Mammary epithelial cell (primary cell): ENCODE measurements at regions of chr3 and their contacts with region 1.

Region 1: DNA sequence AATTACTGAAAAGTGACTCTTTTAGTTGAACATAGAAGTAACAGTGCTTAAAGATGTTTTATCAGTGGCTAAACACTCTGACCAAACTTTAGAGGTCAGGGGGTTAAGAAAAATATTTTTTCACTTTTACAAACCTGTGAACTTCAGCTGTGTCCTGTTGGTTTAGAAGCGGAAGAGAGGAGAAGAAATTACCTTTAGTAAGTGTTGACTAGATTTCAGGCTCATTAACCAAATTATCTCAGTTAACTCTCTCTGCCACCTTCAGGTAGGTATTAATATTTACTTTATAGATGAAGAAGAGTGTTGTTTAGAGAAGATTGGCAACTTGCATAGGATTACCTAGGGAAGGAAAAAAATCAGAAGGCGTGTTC is 151.9 kb upstream of the CMC1 start:
- DNase-seq: peak; percentile 1
- H3K4me3 ChIP-seq: no peak overlapping the region
- H3K27ac ChIP-seq: no peak overlapping the region
- H3K4me1 ChIP-seq: no peaks in the 10 kb centered on the region
- H3K27me3 ChIP-seq: no peaks in the 10 kb centered on the region
- CTCF ChIP-seq: peak in 1 of 2 donors; percentile 45

Region 2: DNA sequence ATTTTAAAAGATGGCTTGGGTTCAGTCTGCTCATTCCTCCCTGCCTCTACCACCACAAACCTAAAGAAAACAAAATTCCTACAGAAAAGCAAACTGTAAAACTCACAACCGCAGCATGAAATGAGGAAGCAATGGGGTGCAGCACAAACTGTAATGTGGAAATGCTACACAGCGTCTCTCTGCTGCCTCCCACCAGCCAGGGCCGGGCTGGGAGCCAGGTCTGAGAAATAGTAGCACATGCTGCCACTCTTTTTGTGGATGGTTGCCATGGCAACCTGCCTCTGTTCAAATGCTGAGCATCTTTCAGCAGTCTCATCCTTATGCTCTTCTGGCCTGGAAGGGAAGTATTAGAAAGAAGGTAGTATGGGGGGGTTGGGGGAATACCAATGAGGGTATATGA is 422.8 kb before region 1 on chr3:
- CTCF ChIA-PET with region 1: no interaction called
- dilution Hi-C with region 1: no loop called
- in situ Hi-C with region 1: no loop called
- intact Hi-C with region 1: no loop called
- DNase-seq: no peak
- H3K4me3 ChIP-seq: no peak overlapping the region
- H3K27ac ChIP-seq: no peak overlapping the region
- H3K4me1 ChIP-seq: peaks cover 3% of the 10 kb centered on the region
- H3K27me3 ChIP-seq: no peaks in the 10 kb centered on the region
- CTCF ChIP-seq: no peak

Region 3: DNA sequence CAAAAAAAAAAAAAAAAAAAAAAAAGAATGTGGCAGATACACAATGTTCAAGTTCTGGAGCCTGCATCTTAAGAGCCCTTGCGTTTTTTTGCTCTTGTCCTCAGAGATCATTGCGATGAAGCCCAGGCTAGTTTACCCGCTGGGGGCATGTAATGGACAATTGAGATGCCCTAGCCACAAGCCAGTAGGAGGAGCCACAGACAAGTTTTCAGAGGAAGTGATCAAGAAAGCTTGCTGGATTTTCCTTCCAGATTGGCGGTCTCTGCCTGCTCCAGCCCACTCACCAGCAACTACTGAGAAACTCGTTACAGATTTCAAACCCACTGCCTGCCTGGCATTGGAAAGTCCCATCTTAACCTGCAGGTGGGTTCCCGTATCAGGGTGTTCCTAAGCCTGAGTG is 175.3 kb before region 1 on chr3:
- CTCF ChIA-PET with region 1: no interaction called
- dilution Hi-C with region 1: no loop called
- in situ Hi-C with region 1: no loop called
- intact Hi-C with region 1: loop called (anchors 1 kb)
- DNase-seq: peak; percentile 6
- H3K4me3 ChIP-seq: no peak overlapping the region
- H3K27ac ChIP-seq: no peak overlapping the region
- H3K4me1 ChIP-seq: no peaks in the 10 kb centered on the region
- H3K27me3 ChIP-seq: peaks cover 2% of the 10 kb centered on the region
- CTCF ChIP-seq: peak in 1 of 2 donors; percentile 32

Region 4: GRCh38 chr3:27943106-27943505 is 146.4 kb before region 1 on chr3:
- CTCF ChIA-PET with region 1: no interaction called
- dilution Hi-C with region 1: no loop called
- in situ Hi-C with region 1: no loop called
- intact Hi-C with region 1: loop called (anchors 1 kb)
- DNase-seq: peak; percentile 20
- H3K4me3 ChIP-seq: no peak overlapping the region
- H3K27ac ChIP-seq: no peak overlapping the region
- H3K4me1 ChIP-seq: no peaks in the 10 kb centered on the region
- H3K27me3 ChIP-seq: no peaks in the 10 kb centered on the region
- CTCF ChIP-seq: peak; percentile 34 to 58

Region 5: GRCh38 chr3:28171962-28172361 is 82.5 kb after region 1 on chr3:
- CTCF ChIA-PET with region 1: no interaction called
- dilution Hi-C with region 1: no loop called
- in situ Hi-C with region 1: no loop called
- intact Hi-C with region 1: no loop called
- DNase-seq: no peak
- H3K4me3 ChIP-seq: no peak overlapping the region
- H3K27ac ChIP-seq: no peak overlapping the region
- H3K4me1 ChIP-seq: no peaks in the 10 kb centered on the region
- H3K27me3 ChIP-seq: peaks cover under 1% of the 10 kb centered on the region
- CTCF ChIP-seq: no peak

Region 6: GRCh38 chr3:28317438-28318022 is 228.0 kb after region 1 on chr3:
- CTCF ChIA-PET with region 1: no interaction called
- dilution Hi-C with region 1: no loop called
- in situ Hi-C with region 1: no loop called
- intact Hi-C with region 1: no loop called
- DNase-seq: peak; percentile 39
- H3K4me3 ChIP-seq: no peak overlapping the region
- H3K27ac ChIP-seq: no peak overlapping the region
- H3K4me1 ChIP-seq: no peaks in the 10 kb centered on the region
- H3K27me3 ChIP-seq: no peaks in the 10 kb centered on the region
- CTCF ChIP-seq: peak; percentile 68 to 72